A549 (cell line): ENCODE measurements at regions of chr11 and their contacts with region 1.

Region 1: DNA sequence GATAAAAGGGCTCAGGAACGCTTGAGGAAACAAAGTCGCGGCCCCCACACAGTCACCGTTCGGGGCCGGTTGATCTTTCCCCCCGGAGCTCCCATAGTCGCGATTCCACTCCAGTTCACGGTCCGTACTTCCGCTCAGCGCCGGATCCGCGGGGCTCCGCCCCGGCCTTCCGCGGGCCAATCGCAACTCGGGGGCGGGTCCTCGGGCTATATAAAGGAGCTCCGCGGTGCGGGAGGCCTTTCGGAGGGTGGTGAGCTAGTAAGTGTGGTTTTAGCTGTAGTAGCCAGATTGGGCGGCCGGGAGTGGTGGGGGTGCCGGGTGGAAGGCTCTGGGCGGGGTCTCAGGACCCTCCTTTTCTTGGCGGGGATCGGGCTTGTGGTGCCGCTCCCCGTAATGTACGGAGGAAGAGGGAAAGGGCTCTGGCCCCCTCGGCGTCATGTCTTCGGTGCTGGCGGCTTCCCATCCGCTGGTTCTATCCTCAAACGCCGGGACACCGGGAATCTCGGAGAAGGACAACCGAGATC is at the starts of genes C11orf98 and CSKMT:
- DNase-seq: peak; percentile 93 to 97
- ATAC-seq: peak; percentile 89 to 92
- H3K4me3 ChIP-seq: peak within 1 kb of the TSS; percentile 79
- H3K27ac ChIP-seq: peak within 1 kb of the TSS; percentile 93 to 96
- H3K4me1 ChIP-seq: peaks cover 30% of the 10 kb centered on the region
- CTCF ChIP-seq: no peak
- EP300 ChIP-seq: no peak
- POLR2A ChIP-seq: peak; percentile 97
- RAD21 ChIP-seq: no peak
- polyA plus RNA-seq, gene C11orf98: 89.1 and 91.7 TPM in 2 replicates
- polyA plus RNA-seq, gene CSKMT: 5.4 and 5.7 TPM in 2 replicates

Region 2: GRCh38 chr11:62143727-62144126 is 521.4 kb before region 1 on chr11:
- CTCF ChIA-PET with region 1: no interaction called
- POLR2A ChIA-PET with region 1: no interaction called
- DNase-seq: no peak
- ATAC-seq: peak in 1 of 2 experiments; percentile 28; a peak in 2 of 6 replicates
- H3K4me3 ChIP-seq: no peak overlapping the region
- H3K27ac ChIP-seq: no peak overlapping the region
- H3K4me1 ChIP-seq: no peaks in the 10 kb centered on the region
- CTCF ChIP-seq: no peak
- EP300 ChIP-seq: no peak
- POLR2A ChIP-seq: no peak
- RAD21 ChIP-seq: no peak

Region 3: DNA sequence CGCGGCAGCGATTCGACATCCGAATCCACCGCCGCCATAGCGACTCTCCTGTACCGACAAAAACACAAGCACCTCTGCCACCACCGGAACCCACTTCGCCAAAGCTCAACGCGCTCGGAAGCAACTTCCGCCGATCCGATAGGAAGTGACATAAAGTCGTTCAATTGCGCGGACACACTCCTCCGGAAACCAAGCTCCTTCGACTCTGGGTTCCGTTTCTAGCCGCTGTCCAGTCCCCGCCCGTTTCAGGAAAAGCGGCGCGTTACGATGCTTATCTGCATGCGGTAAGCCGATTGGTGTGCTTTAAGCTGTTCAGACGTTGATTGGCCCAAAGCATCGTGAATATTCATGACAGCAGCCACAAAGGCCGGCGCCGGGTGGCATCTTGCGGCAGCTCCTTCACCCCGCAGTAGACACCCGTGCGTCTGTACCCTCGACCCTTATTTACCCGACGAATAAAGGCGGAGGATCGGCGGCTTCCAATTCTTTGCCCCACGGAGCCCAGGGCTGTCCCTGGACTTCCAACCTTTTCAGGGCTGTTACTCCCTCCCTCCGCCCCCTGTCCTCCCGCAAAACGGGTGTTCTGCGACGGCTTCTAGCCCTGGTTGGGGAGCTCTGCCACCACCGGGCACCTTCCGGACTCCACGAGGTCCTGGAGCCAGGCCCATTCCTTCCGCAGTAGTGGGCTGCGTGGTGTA is 73.5 kb before region 1 on chr11 and contains the start of gene TUT1:
- CTCF ChIA-PET with region 1: interaction called, 4 read pairs
- POLR2A ChIA-PET with region 1: interaction called, 49 read pairs
- DNase-seq: peak; percentile 96 to 100
- ATAC-seq: peak; percentile 89 to 95
- H3K4me3 ChIP-seq: peak within 1 kb of the TSS; percentile 79
- H3K27ac ChIP-seq: peak within 1 kb of the TSS; percentile 90 to 91
- H3K4me1 ChIP-seq: peaks cover 49% of the 10 kb centered on the region
- CTCF ChIP-seq: no peak
- EP300 ChIP-seq: no peak
- POLR2A ChIP-seq: peak; percentile 87
- RAD21 ChIP-seq: no peak; a peak in 1 of 5 replicates
- polyA plus RNA-seq, gene TUT1: 12.9 and 15.5 TPM in 2 replicates

Region 4: GRCh38 chr11:62612366-62613290 is 52.5 kb before region 1 on chr11 and contains the starts of genes EML3 and ROM1:
- CTCF ChIA-PET with region 1: interaction called, 5 read pairs
- POLR2A ChIA-PET with region 1: interaction called, 12 read pairs
- DNase-seq: peak; percentile 88
- ATAC-seq: peak; percentile 65 to 82
- H3K4me3 ChIP-seq: peak within 1 kb of the TSS; percentile 61
- H3K27ac ChIP-seq: peak within 1 kb of the TSS; percentile 80 to 98
- H3K4me1 ChIP-seq: peaks cover 29% of the 10 kb centered on the region
- CTCF ChIP-seq: peak; percentile 100
- EP300 ChIP-seq: no peak
- POLR2A ChIP-seq: no peak
- RAD21 ChIP-seq: peak in 1 of 2 experiments; percentile 59; a peak in 3 of 5 replicates
- polyA plus RNA-seq, gene EML3: 15.2 and 19.7 TPM in 2 replicates
- polyA plus RNA-seq, gene ROM1: 0.92 and 1.6 TPM in 2 replicates

Region 5: GRCh38 chr11:62645956-62646824 is 18.9 kb before region 1 on chr11 and contains the start of gene GANAB:
- CTCF ChIA-PET with region 1: interaction called, 3 read pairs
- POLR2A ChIA-PET with region 1: interaction called, 35 read pairs
- DNase-seq: peak; percentile 97 to 99
- ATAC-seq: peak; percentile 97 to 99
- H3K4me3 ChIP-seq: peak within 1 kb of the TSS; percentile 79
- H3K27ac ChIP-seq: peak within 1 kb of the TSS; percentile 94 to 97
- H3K4me1 ChIP-seq: peaks cover 11% of the 10 kb centered on the region
- CTCF ChIP-seq: no peak
- EP300 ChIP-seq: no peak
- POLR2A ChIP-seq: peak; percentile 89
- RAD21 ChIP-seq: no peak
- polyA plus RNA-seq, gene GANAB: 215 and 308 TPM in 2 replicates

Region 6: DNA sequence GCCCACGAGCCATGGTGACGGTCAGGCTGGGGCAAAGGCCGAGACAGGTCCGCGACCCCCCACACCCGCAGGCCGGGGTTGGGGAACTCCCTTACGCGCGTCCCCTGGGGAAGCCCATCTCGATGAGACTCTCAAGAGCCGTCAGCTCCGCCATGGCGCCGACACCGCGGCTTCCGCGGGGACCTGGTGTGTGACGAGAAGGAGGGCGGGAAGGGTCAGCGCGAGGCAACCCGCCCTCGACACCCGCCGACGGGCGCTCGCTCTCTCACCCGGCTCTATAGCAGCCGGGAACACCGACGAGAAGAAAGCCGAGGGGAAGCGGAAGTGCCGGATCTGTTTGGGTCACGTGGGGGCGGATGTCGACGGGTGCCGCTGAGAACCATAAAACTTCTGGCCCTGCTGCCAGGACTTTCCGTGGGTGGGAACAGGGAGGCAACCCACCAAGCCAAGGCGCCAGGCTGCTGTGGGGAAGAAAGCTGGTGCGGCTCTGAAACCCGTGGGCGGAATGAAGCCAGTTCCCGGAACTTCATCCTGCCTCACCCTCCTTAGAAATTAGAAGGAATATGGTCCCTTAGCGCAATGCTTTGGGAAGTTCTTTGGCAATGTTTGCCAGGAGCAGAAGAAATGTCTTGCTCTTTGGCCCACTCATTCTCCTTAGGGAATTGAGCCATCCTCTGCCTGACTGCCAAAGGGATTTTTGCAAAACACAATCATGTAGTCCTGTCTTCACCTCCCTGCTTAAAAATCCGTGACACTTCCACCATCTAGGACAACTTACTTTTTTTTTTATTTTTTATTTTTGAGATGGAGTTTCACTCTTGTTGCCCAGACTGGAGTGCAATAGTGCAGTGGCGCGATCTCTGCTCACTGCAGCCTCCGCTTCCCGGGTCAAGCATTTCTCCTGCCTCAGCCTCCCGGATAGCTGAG is 13.9 kb after region 1 on chr11 and contains the start of gene UBXN1:
- CTCF ChIA-PET with region 1: interaction called, 30 read pairs
- POLR2A ChIA-PET with region 1: interaction called, 36 read pairs
- DNase-seq: peak; percentile 87 to 92
- ATAC-seq: peak; percentile 84 to 86
- H3K4me3 ChIP-seq: peak within 1 kb of the TSS; percentile 67
- H3K27ac ChIP-seq: peak within 1 kb of the TSS; percentile 87 to 92
- H3K4me1 ChIP-seq: peaks cover 24% of the 10 kb centered on the region
- CTCF ChIP-seq: no peak
- EP300 ChIP-seq: no peak
- POLR2A ChIP-seq: peak; percentile 57
- RAD21 ChIP-seq: no peak
- polyA plus RNA-seq, gene UBXN1: 56.8 and 120 TPM in 2 replicates

Region 7: GRCh38 chr11:62726915-62727763 is 62.0 kb after region 1 on chr11 and contains the start of gene HNRNPUL2:
- CTCF ChIA-PET with region 1: interaction called, 3 read pairs
- POLR2A ChIA-PET with region 1: interaction called, 43 read pairs
- DNase-seq: peak; percentile 97 to 100
- ATAC-seq: peak; percentile 88 to 91
- H3K4me3 ChIP-seq: peak within 1 kb of the TSS; percentile 78
- H3K27ac ChIP-seq: peak within 1 kb of the TSS; percentile 97
- H3K4me1 ChIP-seq: peaks cover 21% of the 10 kb centered on the region
- CTCF ChIP-seq: no peak
- EP300 ChIP-seq: no peak
- POLR2A ChIP-seq: peak; percentile 77
- RAD21 ChIP-seq: no peak
- polyA plus RNA-seq, gene HNRNPUL2: 31.4 and 31.6 TPM in 2 replicates

Region 8: DNA sequence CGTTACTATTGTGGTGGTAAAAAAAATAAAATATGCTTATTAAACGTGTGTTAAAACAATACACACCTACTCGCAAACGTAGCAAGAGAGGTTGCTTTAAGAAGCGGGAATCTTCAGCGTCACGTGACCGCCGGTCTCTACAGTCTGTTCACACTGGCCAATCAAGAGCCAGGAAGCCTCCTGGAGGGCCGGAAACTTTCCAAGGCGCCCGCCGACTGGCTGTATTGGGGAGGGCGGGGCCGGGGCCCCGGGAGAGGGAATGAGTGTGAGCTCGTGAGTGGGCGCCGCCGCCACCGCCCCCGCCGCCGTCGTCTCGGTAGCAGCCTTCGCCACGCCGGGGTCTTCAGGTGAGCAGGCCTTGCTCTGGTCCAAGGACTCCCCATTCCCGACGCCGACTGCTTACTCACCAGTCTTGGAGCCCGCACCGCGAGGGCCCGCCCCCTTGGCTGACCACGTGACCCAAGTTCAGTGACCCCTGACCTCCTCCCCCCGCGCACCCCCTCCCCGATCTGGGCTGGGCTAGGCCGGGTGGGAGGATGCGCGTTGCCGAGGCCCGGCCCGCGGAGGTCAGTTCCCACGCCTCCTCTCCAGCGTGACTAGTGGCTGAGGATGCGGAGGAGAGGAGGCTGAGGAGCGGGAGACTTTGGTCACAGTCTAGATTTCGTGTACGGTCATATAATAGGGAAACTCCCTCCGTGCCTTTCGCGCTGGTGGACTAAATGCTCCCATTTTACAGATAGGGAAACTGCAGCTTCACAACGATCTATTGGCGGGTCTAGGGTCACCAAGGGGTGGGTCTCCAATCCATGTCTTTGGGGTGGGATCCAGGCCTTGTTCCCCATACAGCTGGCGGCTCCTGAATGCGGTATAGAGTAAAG is 106.2 kb after region 1 on chr11 and contains the start of gene TAF6L:
- CTCF ChIA-PET with region 1: interaction called, 3 read pairs
- POLR2A ChIA-PET with region 1: interaction called, 19 read pairs
- DNase-seq: peak; percentile 97 to 98
- ATAC-seq: peak; percentile 96 to 97
- H3K4me3 ChIP-seq: peak within 1 kb of the TSS; percentile 78
- H3K27ac ChIP-seq: peak within 1 kb of the TSS; percentile 93 to 94
- H3K4me1 ChIP-seq: peaks cover 15% of the 10 kb centered on the region
- CTCF ChIP-seq: no peak
- EP300 ChIP-seq: no peak
- POLR2A ChIP-seq: peak; percentile 55
- RAD21 ChIP-seq: no peak
- polyA plus RNA-seq, gene TAF6L: 14.0 and 17.5 TPM in 2 replicates